ENCODE measurements at regions of chr15 and their contacts with region 1.

Region 1: DNA sequence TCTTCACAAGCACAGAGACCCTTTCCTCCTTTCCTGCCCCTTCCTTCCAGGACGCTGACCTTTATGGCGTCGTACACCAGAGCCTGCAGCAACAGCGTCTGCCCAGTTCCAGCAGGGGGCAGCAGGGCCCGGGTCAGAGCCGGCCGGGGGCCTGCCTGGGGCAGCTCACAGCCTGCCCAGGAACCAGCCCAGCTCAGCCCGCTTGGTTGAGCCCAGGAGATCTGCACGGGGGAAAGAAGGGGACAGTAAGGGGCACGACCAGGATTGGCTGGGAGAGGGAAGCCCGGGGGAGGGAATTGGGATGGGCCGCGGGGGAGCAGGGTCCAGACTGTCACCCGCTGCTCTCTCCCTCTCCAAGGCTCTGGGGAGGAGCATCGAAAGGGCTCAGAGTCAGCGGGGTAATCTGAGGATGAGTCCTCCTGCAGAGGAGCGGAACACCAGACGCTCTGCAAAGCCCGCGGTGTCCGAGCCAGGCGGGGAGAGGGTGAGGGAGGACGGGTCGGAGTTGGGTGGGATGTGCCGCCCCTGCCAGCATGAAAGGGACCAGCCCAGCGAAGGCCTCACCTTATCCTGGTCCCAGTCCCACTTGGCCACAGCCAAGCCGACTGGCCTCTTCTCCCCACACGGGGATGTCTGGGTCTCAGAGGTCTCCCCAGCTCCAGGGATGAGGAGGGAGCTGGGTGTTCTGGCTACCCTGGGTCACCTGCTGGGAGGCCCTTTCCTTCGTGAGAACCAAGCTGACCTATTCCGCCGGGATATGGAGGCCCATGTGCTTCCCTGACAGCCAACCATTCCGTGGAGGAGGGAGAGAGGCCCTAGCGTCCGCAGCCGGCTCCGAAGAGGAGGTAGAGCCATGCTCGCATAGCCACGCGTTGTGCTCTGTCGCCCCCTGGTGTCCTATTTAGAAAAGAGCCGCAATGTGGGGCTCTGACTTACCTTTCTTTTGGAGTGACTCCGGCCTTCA is 7.4 kb upstream of the IGDCC3 start:
- DNase-seq: peak; percentile 89
- H3K4me3 Mint-ChIP-seq: peak overlapping the region; percentile 77
- H3K27ac Mint-ChIP-seq: peak overlapping the region; percentile 50
- H3K4me1 Mint-ChIP-seq: peaks cover 4% of the 10 kb centered on the region
- H3K27me3 Mint-ChIP-seq: peaks cover 12% of the 10 kb centered on the region

Region 2: DNA sequence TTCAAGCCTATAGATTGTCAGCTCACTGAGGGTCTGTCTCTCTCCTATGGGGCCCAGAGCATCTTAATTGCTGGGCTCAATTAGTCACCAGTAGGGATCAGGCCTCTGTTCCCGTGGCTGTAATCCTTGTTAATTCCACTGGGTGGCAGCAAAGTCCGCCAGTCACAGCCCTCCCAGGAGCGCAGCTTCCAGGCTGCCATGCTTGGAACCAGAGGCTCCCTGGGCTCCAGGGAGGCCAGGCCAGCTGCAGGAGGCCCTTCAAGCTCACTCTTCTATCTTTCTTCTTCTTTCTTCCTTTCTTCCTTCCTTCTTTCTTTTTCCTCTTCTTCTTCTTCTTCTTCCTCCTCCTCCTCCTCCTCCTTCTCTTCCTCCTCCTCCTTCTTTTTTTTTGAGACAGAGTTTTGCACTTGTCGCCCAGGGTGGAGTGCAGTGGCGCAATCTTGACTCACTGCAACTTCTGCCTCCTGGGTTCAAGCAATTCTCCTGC is 66.3 kb before region 1 on chr15:
- CTCF ChIA-PET with region 1: interaction called, 186 read pairs
- POLR2A ChIA-PET with region 1: no interaction called
- intact Hi-C with region 1: loop called (anchors 1 kb)
- DNase-seq: peak; percentile 88
- H3K4me3 Mint-ChIP-seq: no peak overlapping the region
- H3K27ac Mint-ChIP-seq: no peak overlapping the region
- H3K4me1 Mint-ChIP-seq: no peaks in the 10 kb centered on the region
- H3K27me3 Mint-ChIP-seq: peaks cover 2% of the 10 kb centered on the region

Region 3: GRCh38 chr15:65326117-65326526 is 59.1 kb before region 1 on chr15:
- CTCF ChIA-PET with region 1: interaction called, 186 read pairs
- POLR2A ChIA-PET with region 1: no interaction called
- intact Hi-C with region 1: no loop called
- DNase-seq: no peak
- H3K4me3 Mint-ChIP-seq: no peak overlapping the region
- H3K27ac Mint-ChIP-seq: no peak overlapping the region
- H3K4me1 Mint-ChIP-seq: no peaks in the 10 kb centered on the region
- H3K27me3 Mint-ChIP-seq: peaks cover 7% of the 10 kb centered on the region

Region 4: DNA sequence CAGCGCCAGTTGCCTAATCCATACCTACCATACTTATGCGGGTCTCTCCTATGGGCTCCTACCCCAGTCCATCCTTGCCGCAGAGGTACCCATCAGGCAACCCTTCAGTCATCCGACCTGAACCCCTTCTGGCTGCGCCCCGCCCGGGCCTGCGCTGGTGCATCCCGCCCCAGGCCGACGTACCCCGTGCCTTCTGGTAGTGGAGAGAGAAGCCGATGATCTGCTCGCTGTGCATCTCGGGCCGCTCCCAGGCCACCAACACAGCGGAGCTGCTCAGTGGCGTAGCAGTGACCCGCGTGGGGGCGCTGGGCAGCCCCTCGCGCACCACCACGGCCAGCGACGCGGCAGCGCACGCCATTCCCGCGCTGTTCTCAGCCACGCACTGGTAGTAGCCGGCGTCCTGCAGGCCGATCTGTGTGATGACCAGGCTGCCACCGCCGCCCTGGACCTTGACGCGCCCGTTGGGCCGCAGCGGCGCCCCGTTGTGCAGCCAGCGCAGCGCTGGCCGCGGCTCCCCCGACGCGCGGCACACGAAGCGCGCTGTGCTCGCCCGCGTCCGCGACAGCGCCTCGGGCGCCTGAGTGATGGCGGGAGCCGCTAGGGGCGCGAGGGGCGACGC is 10.5 kb after region 1 on chr15:
- CTCF ChIA-PET with region 1: interaction called, 26 read pairs
- POLR2A ChIA-PET with region 1: no interaction called
- intact Hi-C with region 1: loop called (anchors 2 kb)
- DNase-seq: no peak
- H3K4me3 Mint-ChIP-seq: no peak overlapping the region
- H3K27ac Mint-ChIP-seq: no peak overlapping the region
- H3K4me1 Mint-ChIP-seq: peaks cover 6% of the 10 kb centered on the region
- H3K27me3 Mint-ChIP-seq: peaks cover 48% of the 10 kb centered on the region

Region 5: DNA sequence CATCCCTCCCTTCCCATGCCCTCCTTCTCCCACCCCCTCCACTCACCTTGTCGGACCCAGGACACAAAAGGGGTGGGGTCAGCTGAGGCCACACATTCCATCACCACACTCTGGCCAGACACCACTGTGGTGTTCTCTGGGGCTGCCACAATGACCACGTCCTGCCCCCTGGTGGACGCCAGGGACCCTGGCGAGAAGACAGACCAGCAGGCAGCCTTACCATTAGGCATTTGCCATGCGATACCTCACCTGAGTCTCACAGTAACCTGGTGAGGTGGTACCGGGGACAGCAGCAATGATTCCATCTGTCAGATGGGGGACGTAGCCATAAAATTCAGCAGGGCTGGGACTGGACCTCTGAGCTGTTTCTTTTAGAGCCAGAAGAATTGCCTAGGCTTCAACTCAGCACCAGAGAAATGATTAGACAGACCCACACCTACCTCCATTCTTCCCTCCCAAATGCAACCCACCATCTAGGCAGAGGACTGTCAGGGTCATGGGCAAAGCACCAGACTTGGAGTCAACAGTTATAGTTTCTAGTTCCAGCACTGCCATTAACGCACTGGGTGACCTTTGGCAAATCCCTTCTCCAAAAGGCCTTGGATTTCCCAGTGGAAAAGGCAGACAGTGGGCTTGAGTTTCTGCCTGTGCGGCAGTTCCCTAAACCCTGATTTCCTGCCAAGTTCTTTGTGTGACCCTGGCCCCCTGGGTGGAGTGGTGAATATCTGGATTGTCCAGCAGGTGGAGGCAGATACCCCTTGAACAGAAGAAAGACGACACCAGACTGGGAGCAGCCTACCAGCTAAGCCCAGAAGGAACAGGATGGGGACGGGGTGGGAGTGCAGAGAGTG is 15.8 kb after region 1 on chr15:
- CTCF ChIA-PET with region 1: interaction called, 26 read pairs
- POLR2A ChIA-PET with region 1: no interaction called
- intact Hi-C with region 1: loop called (anchors 2 kb)
- DNase-seq: peak; percentile 68
- H3K4me3 Mint-ChIP-seq: no peak overlapping the region
- H3K27ac Mint-ChIP-seq: no peak overlapping the region
- H3K4me1 Mint-ChIP-seq: peaks cover 6% of the 10 kb centered on the region
- H3K27me3 Mint-ChIP-seq: peaks cover 46% of the 10 kb centered on the region

Measured in activated CD4-positive, alpha-beta memory T cell treated with anti-CD3 and anti-CD28 coated beads for 36 hours (primary cell).